Calu3 (cell line): ENCODE measurements at regions of chr15 and their contacts with region 1.

Region 1: GRCh38 chr15:50697109-50697797 is 10.7 kb upstream of the TRPM7 start:
- DNase-seq: no peak
- H3K4me3 Mint-ChIP-seq: no peak overlapping the region
- H3K27ac Mint-ChIP-seq: no peak overlapping the region
- H3K4me1 Mint-ChIP-seq: no peaks in the 10 kb centered on the region
- H3K27me3 Mint-ChIP-seq: no peaks in the 10 kb centered on the region
- CTCF ChIP-seq: no peak

Region 2: DNA sequence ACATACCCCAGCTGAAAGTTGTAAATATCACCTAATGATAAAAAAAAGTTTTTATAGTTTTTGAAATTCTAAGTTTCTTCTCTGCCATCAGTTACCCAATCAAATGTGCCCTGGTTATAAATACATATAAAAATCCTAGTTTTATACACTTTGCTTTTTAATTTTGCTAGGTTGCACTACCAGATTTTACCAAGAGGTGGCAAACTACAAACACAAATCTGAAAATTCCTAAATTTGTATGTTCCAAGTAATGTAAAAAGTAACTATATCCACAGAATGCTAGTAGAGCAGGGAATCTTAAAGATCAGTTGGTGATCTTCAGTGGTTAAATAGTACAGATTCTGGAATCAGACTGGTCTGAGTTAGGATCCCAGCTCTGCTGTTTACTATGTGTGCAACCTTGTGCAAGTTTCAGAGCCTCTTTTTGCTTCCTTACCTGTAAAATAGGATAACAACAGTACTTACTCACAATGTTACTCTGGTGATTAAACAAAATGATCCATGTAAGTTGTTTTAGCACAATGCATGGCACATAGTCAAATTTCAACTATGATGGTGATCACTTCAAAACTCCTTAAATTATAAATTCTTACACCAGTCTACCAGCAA is 21.6 kb before region 1 on chr15:
- CTCF ChIA-PET with region 1: interaction called, 12 read pairs
- intact Hi-C with region 1: no loop called
- DNase-seq: peak; percentile 27
- H3K4me3 Mint-ChIP-seq: no peak overlapping the region
- H3K27ac Mint-ChIP-seq: no peak overlapping the region
- H3K4me1 Mint-ChIP-seq: peaks cover 9% of the 10 kb centered on the region
- H3K27me3 Mint-ChIP-seq: no peaks in the 10 kb centered on the region
- CTCF ChIP-seq: peak; percentile 68

Region 3: GRCh38 chr15:50686468-50687301 is 10.6 kb before region 1 on chr15 and contains the start of gene TRPM7:
- CTCF ChIA-PET with region 1: no interaction called
- intact Hi-C with region 1: no loop called
- DNase-seq: peak; percentile 92
- H3K4me3 Mint-ChIP-seq: peak within 1 kb of the TSS; percentile 100
- H3K27ac Mint-ChIP-seq: peak within 1 kb of the TSS; percentile 58
- H3K4me1 Mint-ChIP-seq: peaks cover 25% of the 10 kb centered on the region
- H3K27me3 Mint-ChIP-seq: no peaks in the 10 kb centered on the region
- CTCF ChIP-seq: no peak
- total RNA-seq, gene TRPM7: 40.6 and 48.2 TPM in 2 replicates